Activated CD8-positive, alpha-beta T cell treated with anti-CD3 and anti-CD28 coated beads for 36 hours (primary cell): ENCODE measurements at regions of chr14 and their contacts with region 1.

Region 1: GRCh38 chr14:24332268-24332993 is 2.4 kb downstream of the ADCY4 start:
- DNase-seq: peak; percentile 93
- ATAC-seq: peak; percentile 87
- H3K4me3 Mint-ChIP-seq: peak overlapping the region; percentile 68
- H3K27ac Mint-ChIP-seq: no peak overlapping the region
- H3K4me1 Mint-ChIP-seq: peaks cover 43% of the 10 kb centered on the region
- H3K27me3 Mint-ChIP-seq: peaks cover 29% of the 10 kb centered on the region
- CTCF ChIP-seq: peak; percentile 82

Region 2: GRCh38 chr14:24241829-24242443 is 90.5 kb before region 1 on chr14:
- CTCF ChIA-PET with region 1: interaction called, 30 read pairs
- POLR2A ChIA-PET with region 1: no interaction called
- intact Hi-C with region 1: no loop called
- DNase-seq: peak; percentile 93
- ATAC-seq: peak; percentile 84
- H3K4me3 Mint-ChIP-seq: peak overlapping the region; percentile 96
- H3K27ac Mint-ChIP-seq: peak overlapping the region; percentile 98
- H3K4me1 Mint-ChIP-seq: peaks cover 54% of the 10 kb centered on the region
- H3K27me3 Mint-ChIP-seq: no peaks in the 10 kb centered on the region
- CTCF ChIP-seq: no peak

Region 3: GRCh38 chr14:24299255-24300195 is 32.9 kb before region 1 on chr14 and contains the starts of genes DHRS1 and NOP9:
- CTCF ChIA-PET with region 1: interaction called, 138 read pairs
- POLR2A ChIA-PET with region 1: interaction called, 3 read pairs
- intact Hi-C with region 1: no loop called
- DNase-seq: peak; percentile 94
- ATAC-seq: peak; percentile 76
- H3K4me3 Mint-ChIP-seq: peak within 1 kb of the TSS; percentile 89
- H3K27ac Mint-ChIP-seq: peak within 1 kb of the TSS; percentile 88
- H3K4me1 Mint-ChIP-seq: peaks cover 40% of the 10 kb centered on the region
- H3K27me3 Mint-ChIP-seq: no peaks in the 10 kb centered on the region
- CTCF ChIP-seq: no peak
- total RNA-seq, gene DHRS1: 11.9 to 13.6 TPM
- total RNA-seq, gene NOP9: 33.5 to 33.6 TPM

Region 4: GRCh38 chr14:24315807-24316603 is 16.4 kb before region 1 on chr14:
- CTCF ChIA-PET with region 1: interaction called, 138 read pairs
- POLR2A ChIA-PET with region 1: interaction called, 4 read pairs
- intact Hi-C with region 1: no loop called
- DNase-seq: no peak
- ATAC-seq: no peak
- H3K4me3 Mint-ChIP-seq: no peak overlapping the region
- H3K27ac Mint-ChIP-seq: no peak overlapping the region
- H3K4me1 Mint-ChIP-seq: peaks cover 49% of the 10 kb centered on the region
- H3K27me3 Mint-ChIP-seq: no peaks in the 10 kb centered on the region
- CTCF ChIP-seq: no peak

Region 5: DNA sequence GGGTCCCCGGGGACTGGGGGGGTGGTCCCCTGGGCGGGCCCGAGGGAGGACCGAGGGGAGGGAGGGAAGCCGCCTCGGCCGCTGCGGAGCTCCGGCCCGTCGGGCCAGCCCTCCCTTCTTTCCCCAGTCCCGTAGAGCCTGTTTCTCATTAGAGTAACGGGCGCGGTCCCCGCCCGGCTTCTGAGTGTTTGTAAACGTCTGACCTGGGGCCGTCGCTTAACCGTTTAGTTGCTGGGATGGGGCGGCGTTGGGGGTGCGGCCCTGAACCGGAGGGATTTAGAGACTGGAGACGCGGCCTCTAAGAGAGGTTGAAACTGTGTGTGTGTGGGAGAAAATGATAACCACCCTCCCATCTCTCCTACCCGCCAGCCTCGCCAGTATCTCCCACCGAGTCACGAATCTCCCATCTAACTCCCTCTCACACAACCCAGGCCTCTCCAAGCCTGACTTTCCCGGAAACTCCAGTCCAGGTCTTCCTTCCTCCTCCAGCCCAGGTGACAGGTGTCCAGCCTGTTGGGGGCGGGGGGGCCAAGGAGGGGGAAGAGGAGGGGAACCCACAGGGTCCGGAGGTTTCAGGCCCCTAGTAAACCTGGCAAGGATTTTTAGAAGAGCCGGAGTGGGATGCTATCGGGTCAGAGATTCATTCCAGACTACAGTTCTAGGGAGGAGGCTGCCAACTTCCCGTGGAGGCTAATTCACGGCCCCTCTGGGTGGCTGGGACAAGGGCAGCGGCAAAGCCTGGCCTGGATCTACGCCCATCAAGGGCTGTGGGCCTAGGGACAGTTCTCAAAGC is 34.5 kb after region 1 on chr14:
- CTCF ChIA-PET with region 1: interaction called, 47 read pairs
- POLR2A ChIA-PET with region 1: interaction called, 10 read pairs
- intact Hi-C with region 1: loop called (anchors 5 kb)
- DNase-seq: peak; percentile 57
- ATAC-seq: peak; percentile 14
- H3K4me3 Mint-ChIP-seq: peak overlapping the region; percentile 61
- H3K27ac Mint-ChIP-seq: no peak overlapping the region
- H3K4me1 Mint-ChIP-seq: peaks cover 32% of the 10 kb centered on the region
- H3K27me3 Mint-ChIP-seq: peaks cover 40% of the 10 kb centered on the region
- CTCF ChIP-seq: no peak

Region 6: GRCh38 chr14:24411443-24412389 is 79.3 kb after region 1 on chr14:
- CTCF ChIA-PET with region 1: interaction called, 33 read pairs
- POLR2A ChIA-PET with region 1: no interaction called
- intact Hi-C with region 1: no loop called
- DNase-seq: peak; percentile 49
- ATAC-seq: peak; percentile 87
- H3K4me3 Mint-ChIP-seq: no peak overlapping the region
- H3K27ac Mint-ChIP-seq: no peak overlapping the region
- H3K4me1 Mint-ChIP-seq: no peaks in the 10 kb centered on the region
- H3K27me3 Mint-ChIP-seq: no peaks in the 10 kb centered on the region
- CTCF ChIP-seq: peak; percentile 57